Activated CD4-positive, alpha-beta T cell treated with anti-CD3 and anti-CD28 coated beads, Interleukin-2, amount 10 ng/mL, durations not matched to agents 7 days and 5 days (primary cell): ENCODE measurements at regions of chr14 and their contacts with region 1.

Region 1: GRCh38 chr14:68816262-68816942 is 23.5 kb upstream of the ZFP36L1 start:
- DNase-seq: peak; percentile 90
- H3K4me3 Mint-ChIP-seq: peak overlapping the region; percentile 72
- H3K27ac Mint-ChIP-seq: peak overlapping the region; percentile 94
- H3K4me1 Mint-ChIP-seq: peaks cover 65% of the 10 kb centered on the region
- H3K27me3 Mint-ChIP-seq: no peaks in the 10 kb centered on the region

Region 2: GRCh38 chr14:68248481-68249255 is 567.7 kb before region 1 on chr14:
- CTCF ChIA-PET with region 1: interaction called, 65 read pairs
- POLR2A ChIA-PET with region 1: no interaction called
- DNase-seq: peak; percentile 36
- H3K4me3 Mint-ChIP-seq: no peak overlapping the region
- H3K27ac Mint-ChIP-seq: no peak overlapping the region
- H3K4me1 Mint-ChIP-seq: peaks cover 37% of the 10 kb centered on the region
- H3K27me3 Mint-ChIP-seq: no peaks in the 10 kb centered on the region

Region 3: GRCh38 chr14:68703093-68703492 is 113.3 kb before region 1 on chr14:
- CTCF ChIA-PET with region 1: no interaction called
- POLR2A ChIA-PET with region 1: no interaction called
- DNase-seq: no peak
- H3K4me3 Mint-ChIP-seq: no peak overlapping the region
- H3K27ac Mint-ChIP-seq: no peak overlapping the region
- H3K4me1 Mint-ChIP-seq: peaks cover 3% of the 10 kb centered on the region
- H3K27me3 Mint-ChIP-seq: no peaks in the 10 kb centered on the region

Region 4: DNA sequence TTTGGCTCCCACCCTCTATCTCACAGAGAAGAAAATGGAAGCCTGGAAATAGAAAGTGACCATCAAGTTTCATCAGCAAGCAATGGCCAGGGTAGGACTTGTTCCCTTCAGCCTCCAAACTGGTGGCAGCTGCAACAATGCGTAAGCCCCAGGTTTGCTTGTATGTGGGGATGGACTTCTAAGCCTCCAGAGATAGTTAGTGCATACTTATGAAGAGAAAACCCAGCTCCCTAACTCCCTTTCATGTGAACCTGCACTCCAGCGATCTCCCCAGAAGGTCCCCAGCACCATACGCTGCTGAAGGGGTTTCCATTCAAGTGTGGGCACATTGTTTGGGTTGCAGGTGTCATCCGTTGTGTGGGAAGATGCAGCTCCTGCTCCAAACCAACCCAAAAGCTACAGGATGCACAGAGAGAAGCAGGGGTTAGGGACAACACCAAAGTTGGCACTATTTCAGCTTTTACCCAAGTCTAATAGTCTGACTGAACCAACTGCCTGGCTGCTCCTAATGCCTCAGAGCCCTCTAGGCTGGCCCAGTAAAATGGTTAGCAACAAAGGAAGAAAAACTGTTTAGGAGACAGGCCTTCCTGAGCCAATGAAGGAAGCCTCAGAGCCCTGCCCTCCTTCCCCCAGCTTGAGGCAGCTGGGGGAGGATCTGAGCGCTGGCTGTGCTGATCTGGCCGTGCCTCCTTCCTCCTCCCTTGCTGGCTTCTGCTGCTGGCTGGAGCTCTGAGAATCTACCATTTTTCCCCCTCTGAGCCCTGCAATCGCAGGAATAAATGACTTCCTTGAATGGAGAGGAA is 35.8 kb before region 1 on chr14:
- CTCF ChIA-PET with region 1: interaction called, 14 read pairs
- POLR2A ChIA-PET with region 1: interaction called, 3 read pairs
- DNase-seq: peak; percentile 68
- H3K4me3 Mint-ChIP-seq: peak overlapping the region; percentile 63
- H3K27ac Mint-ChIP-seq: peak overlapping the region; percentile 95
- H3K4me1 Mint-ChIP-seq: peaks cover 75% of the 10 kb centered on the region
- H3K27me3 Mint-ChIP-seq: no peaks in the 10 kb centered on the region

Region 5: GRCh38 chr14:68788996-68789820 is 27.2 kb before region 1 on chr14:
- CTCF ChIA-PET with region 1: interaction called, 28 read pairs
- POLR2A ChIA-PET with region 1: interaction called, 17 read pairs
- DNase-seq: peak; percentile 92
- H3K4me3 Mint-ChIP-seq: peak overlapping the region; percentile 88
- H3K27ac Mint-ChIP-seq: peak overlapping the region; percentile 100
- H3K4me1 Mint-ChIP-seq: peaks cover 54% of the 10 kb centered on the region
- H3K27me3 Mint-ChIP-seq: no peaks in the 10 kb centered on the region

Region 6: DNA sequence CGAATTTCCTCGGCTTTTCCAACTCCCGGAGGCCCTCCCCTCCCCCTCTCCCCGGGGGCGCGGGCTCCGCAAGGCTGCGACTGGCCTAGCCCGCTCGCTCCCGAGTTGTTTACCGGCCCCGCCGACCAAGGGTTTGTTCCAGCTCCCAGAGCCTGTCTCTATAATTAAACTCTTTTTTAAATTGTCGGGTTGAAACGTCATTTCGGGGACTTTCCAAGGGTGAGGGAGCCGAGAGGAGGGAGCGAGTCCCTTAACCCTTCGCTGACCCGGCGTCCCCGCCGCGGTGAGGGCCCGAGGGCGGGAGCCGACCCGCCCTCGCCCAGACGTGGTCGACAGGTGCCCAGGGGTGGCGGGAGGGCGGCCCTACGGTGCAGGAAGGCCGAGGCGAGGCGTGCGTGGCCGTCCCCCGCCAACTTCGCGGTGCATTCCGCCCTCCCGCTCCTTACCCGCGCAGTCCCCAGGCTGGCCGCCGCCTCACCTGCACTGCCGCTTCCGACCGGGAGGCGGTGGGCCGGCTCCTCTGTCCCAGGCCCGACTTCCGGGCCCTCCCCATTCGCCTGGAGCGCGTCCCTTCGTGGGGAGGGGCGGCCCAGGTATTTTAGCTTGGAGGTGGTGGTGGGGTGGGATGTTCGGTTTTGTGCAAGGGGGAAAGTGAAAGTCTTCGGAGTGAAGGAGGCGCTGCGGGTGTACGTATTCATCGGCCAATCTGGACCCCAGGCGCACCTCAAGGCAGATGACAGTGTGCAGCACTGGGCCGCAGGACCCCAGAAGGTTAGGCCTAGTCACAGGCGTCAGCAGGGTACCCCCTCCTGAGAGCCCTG is 20.6 kb before region 1 on chr14:
- CTCF ChIA-PET with region 1: interaction called, 39 read pairs
- POLR2A ChIA-PET with region 1: interaction called, 17 read pairs
- DNase-seq: peak; percentile 84
- H3K4me3 Mint-ChIP-seq: peak overlapping the region; percentile 88
- H3K27ac Mint-ChIP-seq: peak overlapping the region; percentile 100
- H3K4me1 Mint-ChIP-seq: peaks cover 34% of the 10 kb centered on the region
- H3K27me3 Mint-ChIP-seq: peaks cover 2% of the 10 kb centered on the region